SK-N-SH (cell line): ENCODE measurements at regions of chr11 and their contacts with region 1.

Region 1: GRCh38 chr11:102495161-102496042 is 35.1 kb downstream of the MMP7 start:
- DNase-seq: peak; percentile 54
- H3K4me3 ChIP-seq: no peak overlapping the region
- H3K27ac ChIP-seq: no peak overlapping the region
- H3K4me1 ChIP-seq: peaks cover 0 to 2% of the 10 kb centered on the region in 2 experiments; a peak in 1 of 4 replicates
- H3K27me3 ChIP-seq: no peaks in the 10 kb centered on the region
- CTCF ChIP-seq: peak; percentile 78
- EP300 ChIP-seq: no peak
- RAD21 ChIP-seq: peak; percentile 90

Region 2: GRCh38 chr11:102293873-102294601 is 201.4 kb before region 1 on chr11:
- CTCF ChIA-PET with region 1: interaction called, 17 read pairs
- POLR2A ChIA-PET with region 1: no interaction called
- DNase-seq: no peak
- H3K4me3 ChIP-seq: peak overlapping the region in 1 of 2 experiments; percentile 13; a peak in 1 of 4 replicates
- H3K27ac ChIP-seq: no peak overlapping the region
- H3K4me1 ChIP-seq: peaks cover 10% of the 10 kb centered on the region in 2 experiments
- H3K27me3 ChIP-seq: no peaks in the 10 kb centered on the region
- CTCF ChIP-seq: peak; percentile 70
- EP300 ChIP-seq: no peak
- RAD21 ChIP-seq: peak; percentile 51

Region 3: GRCh38 chr11:102438311-102439062 is 56.9 kb before region 1 on chr11:
- CTCF ChIA-PET with region 1: no interaction called
- POLR2A ChIA-PET with region 1: no interaction called
- DNase-seq: no peak
- H3K4me3 ChIP-seq: no peak overlapping the region
- H3K27ac ChIP-seq: no peak overlapping the region
- H3K4me1 ChIP-seq: no peaks in the 10 kb centered on the region; a peak in 1 of 4 replicates
- H3K27me3 ChIP-seq: no peaks in the 10 kb centered on the region
- CTCF ChIP-seq: no peak
- EP300 ChIP-seq: no peak
- RAD21 ChIP-seq: no peak

Region 4: GRCh38 chr11:102478673-102479299 is 16.6 kb before region 1 on chr11:
- CTCF ChIA-PET with region 1: interaction called, 11 read pairs
- POLR2A ChIA-PET with region 1: no interaction called
- DNase-seq: no peak
- H3K4me3 ChIP-seq: no peak overlapping the region
- H3K27ac ChIP-seq: no peak overlapping the region
- H3K4me1 ChIP-seq: peaks cover 0 to 13% of the 10 kb centered on the region in 2 experiments; a peak in 1 of 4 replicates
- H3K27me3 ChIP-seq: no peaks in the 10 kb centered on the region
- CTCF ChIP-seq: no peak
- EP300 ChIP-seq: no peak
- RAD21 ChIP-seq: no peak

Region 5: DNA sequence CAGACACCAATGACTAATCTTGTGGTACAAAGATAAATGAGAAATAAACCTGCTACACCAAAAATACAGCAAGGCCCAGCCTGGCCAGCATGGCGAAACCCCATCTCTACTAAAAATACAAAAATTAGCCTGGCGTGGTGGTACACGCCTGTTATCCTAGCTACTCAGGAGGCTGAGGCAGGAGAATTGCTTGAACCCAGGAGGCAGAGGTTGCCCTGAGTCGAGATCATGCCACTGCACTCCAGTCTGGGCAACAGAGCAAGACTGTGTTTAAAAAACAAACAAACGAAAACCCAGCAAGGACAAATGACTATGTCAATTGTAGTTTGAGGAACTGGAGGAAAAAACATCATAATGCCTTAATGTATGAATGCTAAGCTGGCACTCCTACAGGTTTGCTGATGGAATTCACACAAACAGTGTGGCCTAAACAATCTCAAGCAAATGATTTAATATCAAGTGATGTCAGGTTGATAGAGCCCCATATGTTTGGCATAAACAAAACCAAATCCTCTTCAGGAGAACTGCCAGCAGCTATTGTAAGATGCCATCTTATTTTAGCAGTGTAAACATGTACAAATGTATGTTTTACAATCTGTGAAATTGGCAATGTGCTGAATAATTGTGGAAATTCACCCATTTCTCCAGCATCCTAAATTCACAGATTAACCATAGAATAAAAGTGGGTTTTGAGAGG is 15.2 kb after region 1 on chr11:
- CTCF ChIA-PET with region 1: interaction called, 16 read pairs
- POLR2A ChIA-PET with region 1: no interaction called
- DNase-seq: no peak
- H3K4me3 ChIP-seq: no peak overlapping the region
- H3K27ac ChIP-seq: no peak overlapping the region
- H3K4me1 ChIP-seq: no peaks in the 10 kb centered on the region
- H3K27me3 ChIP-seq: no peaks in the 10 kb centered on the region
- CTCF ChIP-seq: no peak
- EP300 ChIP-seq: no peak
- RAD21 ChIP-seq: no peak